ENCODE measurements at regions of chr18 and their contacts with region 1.

Region 1: GRCh38 chr18:7559709-7560319 is 7.3 kb upstream of the PTPRM start:
- DNase-seq: no peak
- ATAC-seq: no peak

Region 2: DNA sequence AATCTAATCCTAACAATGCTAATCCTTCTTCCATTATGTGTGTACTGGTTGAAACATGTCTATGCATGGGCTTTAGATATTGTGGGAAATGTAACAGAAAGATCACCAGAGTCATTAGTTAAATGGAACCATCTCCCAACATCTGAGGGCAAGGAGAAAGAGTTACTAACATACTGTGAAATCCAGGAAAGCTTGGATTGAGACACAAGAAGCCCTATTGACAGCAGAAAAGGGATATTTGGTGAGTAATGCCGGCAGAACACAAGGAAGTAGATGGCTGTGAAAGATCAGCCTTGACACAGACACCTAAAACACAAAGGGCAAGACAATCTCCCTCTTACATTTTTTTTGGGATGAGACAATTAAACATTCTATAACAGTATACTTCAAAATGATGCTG is 413.7 kb before region 1 on chr18:
- intact Hi-C with region 1: no loop called
- DNase-seq: no peak
- ATAC-seq: no peak

Region 3: GRCh38 chr18:7370802-7371201 is 189.0 kb before region 1 on chr18:
- intact Hi-C with region 1: loop called (anchors 2 kb)
- DNase-seq: peak; percentile 77
- ATAC-seq: peak; percentile 81

Region 4: DNA sequence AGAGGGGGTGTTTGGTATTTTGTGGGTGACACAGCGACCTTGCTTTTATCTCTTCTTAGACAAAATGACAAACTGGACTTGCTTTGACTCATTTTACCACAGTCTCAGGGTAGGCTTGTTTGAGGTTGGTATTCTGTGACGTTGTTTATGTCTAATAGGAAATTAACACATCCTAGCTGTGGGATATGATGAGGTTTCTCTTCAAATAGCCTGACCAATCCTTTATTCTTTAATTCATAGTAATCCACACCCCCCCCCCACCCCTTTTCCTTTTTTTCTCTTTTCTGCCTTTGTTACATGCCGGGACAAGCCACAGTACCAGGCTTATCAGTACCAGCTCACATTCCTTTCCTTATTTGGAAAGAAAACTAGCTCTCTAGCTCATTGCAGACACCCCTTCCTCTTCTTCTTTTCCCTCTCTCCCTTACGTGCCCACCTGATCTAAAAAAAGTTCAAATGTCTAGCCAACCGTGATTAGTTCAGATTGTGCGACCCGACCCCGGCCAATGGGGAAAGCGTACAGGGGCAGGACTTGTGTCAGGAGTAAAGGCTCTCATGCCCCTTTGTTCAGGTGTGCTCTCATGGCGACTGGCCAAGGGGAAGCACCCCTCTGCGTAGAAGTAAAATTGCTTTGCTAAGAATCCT is 44.9 kb before region 1 on chr18:
- intact Hi-C with region 1: loop called (anchors 5 kb)
- DNase-seq: no peak
- ATAC-seq: no peak

Region 5: GRCh38 chr18:7855028-7855427 is 295.2 kb after region 1 on chr18:
- intact Hi-C with region 1: no loop called
- DNase-seq: no peak
- ATAC-seq: peak; percentile 95

Measured in Right ventricle myocardium inferior (tissue), 1 donor.